Sigmoid colon (tissue), 7 donors: ENCODE measurements at regions of chr19 and their contacts with region 1.

Region 1: GRCh38 chr19:17470068-17470841 is at the start of gene SLC27A1:
- DNase-seq: peak; percentile 100
- H3K4me3 ChIP-seq: peak within 1 kb of the TSS; percentile 72 to 90 (median 88)
- H3K27ac ChIP-seq: peak within 1 kb of the TSS; percentile 89 to 91 (median 90)
- H3K4me1 ChIP-seq: peaks cover 0 to 42% (median 33%) of the 10 kb centered on the region in 4 donors
- H3K27me3 ChIP-seq: no peaks in the 10 kb centered on the region
- CTCF ChIP-seq: no peak
- EP300 ChIP-seq: no peak
- POLR2A ChIP-seq: no peak
- total RNA-seq, gene SLC27A1: 13.2 to 23.8 (median 15.9) TPM

Region 2: DNA sequence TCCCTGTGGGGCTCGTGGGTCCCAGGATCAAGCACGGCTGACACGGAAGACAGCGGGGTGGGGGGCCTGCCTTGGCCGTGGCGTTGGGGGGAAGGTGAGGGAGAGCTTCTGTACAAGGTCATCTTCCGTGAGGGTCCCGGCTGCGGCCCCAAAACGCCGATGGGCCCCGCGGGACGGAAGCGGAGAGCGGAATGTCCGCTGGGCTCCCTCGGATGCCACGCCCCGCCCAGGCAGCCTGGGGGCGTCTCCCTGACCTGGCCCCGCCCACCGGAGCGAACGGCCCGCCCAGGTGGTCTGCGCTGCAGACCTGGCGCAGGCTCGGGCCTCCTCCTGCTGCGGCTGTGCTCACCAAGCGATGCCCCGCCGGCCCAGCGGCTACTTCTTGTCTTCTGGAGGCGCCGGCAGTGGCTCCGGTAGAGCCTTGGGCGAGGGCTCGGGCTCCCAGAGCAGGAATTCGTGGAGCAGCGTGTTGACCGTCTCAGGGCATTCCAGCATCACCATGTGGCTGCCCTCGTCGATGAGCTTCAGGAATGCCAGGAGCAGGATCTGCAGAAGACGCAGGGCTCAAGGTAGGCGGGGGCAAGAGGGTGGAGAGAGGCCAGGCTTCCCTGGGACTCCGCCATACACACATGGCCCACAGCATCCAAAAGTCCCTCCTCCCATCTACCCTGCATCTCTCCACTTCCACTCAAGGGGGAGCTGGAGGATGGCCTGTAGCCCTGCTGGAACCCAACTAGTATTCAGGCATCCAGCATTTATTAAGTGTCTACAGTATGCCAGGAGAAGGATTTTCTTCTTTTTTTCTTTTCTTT is 177.8 kb before region 1 on chr19:
- intact Hi-C with region 1: no loop called
- DNase-seq: peak; percentile 87
- H3K4me3 ChIP-seq: peak overlapping the region; percentile 23 to 55 (median 42)
- H3K27ac ChIP-seq: peak overlapping the region; percentile 67 to 82 (median 75)
- H3K4me1 ChIP-seq: peaks cover 0 to 20% (median 14%) of the 10 kb centered on the region in 4 donors
- H3K27me3 ChIP-seq: no peaks in the 10 kb centered on the region
- CTCF ChIP-seq: peak; percentile 44 to 70 (median 54)
- EP300 ChIP-seq: no peak
- POLR2A ChIP-seq: no peak

Region 3: DNA sequence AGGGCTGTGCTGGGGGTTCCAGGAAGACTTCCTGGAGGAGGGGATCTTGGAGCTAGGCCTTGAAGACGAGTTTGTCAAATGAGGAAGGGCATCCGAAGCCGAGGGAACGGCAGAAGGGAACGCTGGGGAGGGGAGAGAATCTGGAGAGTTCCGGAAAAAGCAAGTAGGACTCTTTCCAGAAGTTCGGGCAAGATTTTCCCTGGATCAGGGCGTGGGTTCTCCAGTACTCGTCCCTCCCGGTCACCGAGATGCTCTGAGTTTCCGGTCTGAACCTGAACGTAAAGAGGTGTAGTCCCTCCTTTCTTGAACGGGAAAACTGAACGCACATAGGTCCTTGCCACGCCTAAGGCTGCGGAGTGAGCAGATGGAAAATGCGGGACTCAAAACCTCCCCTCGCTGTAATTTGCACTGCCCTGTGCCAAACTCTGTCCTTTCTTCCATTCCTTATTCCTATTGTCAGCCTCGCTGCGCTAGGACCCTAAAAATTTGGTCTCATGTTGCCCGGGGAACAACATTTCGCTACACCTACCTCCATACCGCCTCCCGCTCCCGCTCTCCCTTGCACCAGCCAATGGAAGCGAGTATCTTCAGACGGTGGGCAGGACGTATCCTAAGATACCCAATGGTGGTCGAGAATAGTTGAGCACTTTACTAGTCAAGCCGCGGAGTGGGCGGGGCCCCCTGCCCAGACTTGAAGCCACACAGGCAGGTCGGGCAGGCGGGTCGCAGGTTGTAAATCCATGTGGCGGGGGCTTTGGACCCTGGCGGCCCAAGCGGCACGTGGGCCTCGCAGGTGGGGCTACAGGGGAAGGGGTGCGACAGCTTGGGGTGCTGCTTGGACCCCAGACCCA is 133.2 kb before region 1 on chr19 and contains the start of gene GTPBP3:
- intact Hi-C with region 1: loop called (anchors 2 kb)
- DNase-seq: peak; percentile 99
- H3K4me3 ChIP-seq: peak within 1 kb of the TSS; percentile 52 to 81 (median 66)
- H3K27ac ChIP-seq: peak within 1 kb of the TSS; percentile 83 to 96 (median 90)
- H3K4me1 ChIP-seq: peaks cover 0 to 45% (median 38%) of the 10 kb centered on the region in 4 donors
- H3K27me3 ChIP-seq: peaks cover 0 to 9% (median 0%) of the 10 kb centered on the region in 3 donors
- CTCF ChIP-seq: no peak
- EP300 ChIP-seq: no peak
- POLR2A ChIP-seq: peak in 1 of 2 donors; percentile 16
- total RNA-seq, gene GTPBP3: 4.6 to 22.2 (median 15.4) TPM

Region 4: DNA sequence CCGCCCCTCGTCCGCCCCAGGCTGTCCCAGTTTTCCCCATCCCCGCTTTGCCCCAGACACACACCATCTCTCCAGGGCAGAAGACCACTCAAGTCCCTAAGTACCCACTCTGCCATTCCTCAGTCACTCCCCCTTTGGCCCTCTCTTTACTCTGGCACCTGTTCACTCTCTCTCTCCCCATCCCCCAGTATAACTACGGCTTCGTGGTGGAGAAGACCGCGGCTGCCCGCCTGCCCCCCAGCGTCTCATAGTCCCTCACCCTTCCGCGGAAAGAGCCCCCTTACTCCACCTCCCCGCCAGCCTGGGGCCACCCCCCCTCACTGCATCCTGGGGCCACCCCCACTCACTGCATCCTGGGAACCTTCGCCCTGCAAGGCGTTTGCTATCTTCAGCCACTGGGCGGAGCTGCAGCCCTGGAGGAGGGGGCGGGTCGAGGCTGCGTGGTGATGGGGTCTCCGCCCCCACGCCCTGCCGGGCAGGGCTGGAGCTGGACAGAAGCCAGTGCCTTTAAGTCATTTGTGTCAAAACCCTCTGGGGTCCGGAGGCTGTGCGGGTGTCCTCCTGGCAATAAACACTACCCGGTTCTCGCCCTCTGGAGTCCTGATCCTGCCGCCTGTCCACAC is 45.4 kb before region 1 on chr19:
- intact Hi-C with region 1: loop called (anchors 2 kb)
- DNase-seq: no peak
- H3K4me3 ChIP-seq: no peak overlapping the region
- H3K27ac ChIP-seq: no peak overlapping the region
- H3K4me1 ChIP-seq: peaks cover 0 to 18% (median 16%) of the 10 kb centered on the region in 4 donors
- H3K27me3 ChIP-seq: no peaks in the 10 kb centered on the region
- CTCF ChIP-seq: peak in 2 of 4 experiments; percentile 37 to 40
- EP300 ChIP-seq: no peak
- POLR2A ChIP-seq: no peak

Region 5: DNA sequence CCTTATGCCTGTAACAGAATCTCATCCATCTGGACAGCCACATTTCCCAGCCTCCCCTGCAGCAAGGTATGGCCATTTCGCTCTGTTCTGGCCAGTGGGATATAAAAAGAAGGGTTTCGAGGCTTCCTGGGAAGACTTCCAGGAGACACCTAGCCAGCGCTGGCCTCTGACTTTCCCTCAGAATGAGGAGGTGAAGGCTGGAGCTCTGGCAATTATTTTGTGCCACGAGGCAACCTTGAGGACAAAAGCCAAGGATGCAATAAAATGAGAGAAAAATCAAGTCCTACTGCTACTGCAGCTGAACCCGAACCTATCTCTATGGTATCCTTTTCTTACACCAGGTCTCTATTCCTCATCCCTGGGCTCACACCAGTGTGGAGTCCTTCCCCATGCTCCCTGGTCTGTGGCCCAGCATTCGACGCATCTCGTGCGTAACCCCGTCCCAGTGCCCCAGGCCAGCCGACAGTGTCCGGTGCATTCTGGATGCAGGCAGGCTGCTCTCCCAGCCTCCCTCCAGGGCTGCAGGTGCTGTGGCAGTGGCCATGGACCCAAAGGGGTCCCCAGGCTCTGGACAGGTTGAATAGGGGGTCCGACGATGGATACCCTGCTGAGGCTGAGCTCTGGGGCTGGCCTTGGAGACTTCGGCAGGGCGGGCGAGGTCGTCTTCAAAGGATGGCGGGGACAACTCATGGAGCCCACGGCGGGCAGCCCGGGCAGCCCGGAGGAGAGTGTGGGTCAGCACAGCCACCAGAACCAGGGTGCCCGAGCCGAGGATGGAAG is 34.0 kb before region 1 on chr19:
- intact Hi-C with region 1: no loop called
- DNase-seq: no peak
- H3K4me3 ChIP-seq: no peak overlapping the region
- H3K27ac ChIP-seq: no peak overlapping the region
- H3K4me1 ChIP-seq: no peaks in the 10 kb centered on the region
- H3K27me3 ChIP-seq: no peaks in the 10 kb centered on the region
- CTCF ChIP-seq: no peak
- EP300 ChIP-seq: no peak
- POLR2A ChIP-seq: no peak

Region 6: DNA sequence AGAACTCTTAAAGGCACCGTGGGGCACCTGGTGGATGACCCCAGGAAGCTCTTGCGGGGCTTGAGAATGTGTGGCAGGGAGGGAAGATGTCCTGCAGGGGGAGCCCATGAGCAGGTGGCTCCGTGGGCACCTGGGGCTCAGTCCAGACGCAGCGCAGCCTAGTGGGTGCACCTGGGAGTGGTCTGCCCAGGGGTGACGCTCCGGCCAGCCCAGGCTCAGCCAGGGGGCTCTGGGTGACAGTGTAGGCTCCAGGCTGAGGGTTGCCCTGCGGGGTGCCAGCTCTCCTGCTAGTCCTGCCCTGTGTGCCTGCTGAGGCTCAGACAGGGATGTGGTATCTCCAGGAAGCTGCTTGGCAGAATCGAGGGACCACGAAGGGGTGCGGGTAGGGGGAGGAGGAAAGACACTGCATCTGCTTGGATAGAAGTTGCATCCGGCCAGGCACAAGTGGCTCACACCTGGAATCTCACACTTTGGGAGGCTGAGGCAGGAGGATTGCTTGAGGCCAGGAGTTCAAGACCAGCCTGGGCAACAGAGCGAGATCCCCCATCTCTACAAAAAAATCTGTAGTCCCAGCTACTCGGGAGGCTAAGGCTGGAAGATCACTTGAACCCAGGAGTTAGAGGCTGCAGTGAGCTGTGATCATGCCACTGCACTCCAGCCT is 26.2 kb after region 1 on chr19:
- intact Hi-C with region 1: no loop called
- DNase-seq: peak; percentile 81
- H3K4me3 ChIP-seq: no peak overlapping the region
- H3K27ac ChIP-seq: no peak overlapping the region
- H3K4me1 ChIP-seq: peaks cover 0 to 11% (median 2%) of the 10 kb centered on the region in 4 donors
- H3K27me3 ChIP-seq: no peaks in the 10 kb centered on the region
- CTCF ChIP-seq: peak; percentile 59 to 83 (median 74)
- EP300 ChIP-seq: no peak
- POLR2A ChIP-seq: no peak

Region 7: GRCh38 chr19:17511724-17512573 is 41.7 kb after region 1 on chr19:
- intact Hi-C with region 1: loop called (anchors 5 kb)
- DNase-seq: peak; percentile 95
- H3K4me3 ChIP-seq: peak overlapping the region; percentile 91 to 100 (median 95)
- H3K27ac ChIP-seq: peak overlapping the region; percentile 99 to 100 (median 100)
- H3K4me1 ChIP-seq: peaks cover 0 to 37% (median 30%) of the 10 kb centered on the region in 4 donors
- H3K27me3 ChIP-seq: no peaks in the 10 kb centered on the region
- CTCF ChIP-seq: no peak
- EP300 ChIP-seq: peak in 2 of 4 donors; percentile 15 to 64
- POLR2A ChIP-seq: peak; percentile 15 to 26